ENCODE measurements at regions of chr15 and their contacts with region 1.

Region 1: DNA sequence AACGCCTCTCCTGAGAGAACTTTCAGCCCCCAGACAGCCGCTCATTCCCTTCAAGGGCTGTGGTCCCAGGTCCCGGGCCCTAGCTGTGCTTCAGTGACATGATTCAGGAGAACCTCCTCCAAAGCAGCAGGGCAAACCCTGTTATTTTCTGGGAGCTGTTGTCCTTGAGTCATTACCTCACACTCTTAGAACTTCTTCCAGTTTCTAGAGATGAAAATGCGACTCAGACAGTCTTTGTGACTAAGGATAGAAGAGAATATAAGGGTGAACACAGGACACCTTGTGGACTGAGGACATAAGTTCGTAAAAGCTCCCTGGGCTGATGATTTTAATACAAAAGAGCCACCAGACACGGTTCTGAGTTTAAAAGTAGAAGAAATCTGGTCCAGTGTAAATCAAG is 203.8 kb downstream of the RORA start:
- DNase-seq: no peak
- ATAC-seq: no peak
- H3K4me3 ChIP-seq: no peak overlapping the region
- H3K27ac ChIP-seq: no peak overlapping the region
- H3K4me1 ChIP-seq: no peaks in the 10 kb centered on the region
- H3K27me3 ChIP-seq: no peaks in the 10 kb centered on the region
- CTCF ChIP-seq: no peak
- POLR2A ChIP-seq: no peak

Region 2: GRCh38 chr15:60928970-60929369 is 96.3 kb before region 1 on chr15:
- intact Hi-C with region 1: loop called in 1 of 2 experiments (anchors 10 kb)
- DNase-seq: no peak
- ATAC-seq: no peak
- H3K4me3 ChIP-seq: no peak overlapping the region
- H3K27ac ChIP-seq: no peak overlapping the region
- H3K4me1 ChIP-seq: no peaks in the 10 kb centered on the region
- H3K27me3 ChIP-seq: no peaks in the 10 kb centered on the region
- CTCF ChIP-seq: no peak
- POLR2A ChIP-seq: no peak

Region 3: DNA sequence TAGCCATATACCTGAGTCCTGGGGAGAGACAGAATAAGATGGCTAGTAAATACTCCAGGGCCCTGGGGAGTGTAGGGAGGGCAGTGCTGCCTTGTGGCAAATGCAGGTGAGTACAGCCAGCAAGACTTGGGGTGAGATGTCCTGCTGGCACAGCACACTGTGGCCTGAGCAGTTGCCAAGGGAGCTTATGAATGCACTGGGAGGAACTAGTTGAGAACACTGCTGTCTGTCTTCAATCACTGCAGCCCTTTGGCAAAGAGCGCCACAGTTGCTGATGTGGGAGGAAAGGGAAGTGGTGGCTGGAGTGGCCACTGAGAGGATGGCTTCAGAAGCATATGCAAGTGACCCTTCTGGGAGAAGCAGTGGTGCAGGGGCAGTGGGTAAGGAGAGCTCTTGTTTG is 60.8 kb before region 1 on chr15:
- intact Hi-C with region 1: no loop called
- DNase-seq: no peak
- ATAC-seq: no peak
- H3K4me3 ChIP-seq: no peak overlapping the region
- H3K27ac ChIP-seq: no peak overlapping the region
- H3K4me1 ChIP-seq: no peaks in the 10 kb centered on the region
- H3K27me3 ChIP-seq: no peaks in the 10 kb centered on the region
- CTCF ChIP-seq: no peak
- POLR2A ChIP-seq: no peak